T-cell (primary cell): ENCODE measurements at regions of chr15 and their contacts with region 1.

Region 1: GRCh38 chr15:51731549-51732267 is 5.7 kb downstream of the LYSMD2 start:
- DNase-seq: peak in 28 of 35 experiments; percentile 7 to 80 (median 36)
- ATAC-seq: peak; percentile 65 to 81 (median 66)
- H3K4me3 ChIP-seq: peak overlapping the region; percentile 35 to 39
- H3K4me3 Mint-ChIP-seq: peak overlapping the region; percentile 79 to 84 (median 83)
- H3K27ac ChIP-seq: peak overlapping the region; percentile 92
- H3K27ac Mint-ChIP-seq: peak overlapping the region; percentile 95 to 97
- H3K4me1 ChIP-seq: peaks cover 51 to 76% of the 10 kb centered on the region in 2 experiments
- H3K4me1 Mint-ChIP-seq: peaks cover 87 to 93% (median 91%) of the 10 kb centered on the region in 3 donors
- H3K27me3 ChIP-seq: no peaks in the 10 kb centered on the region
- H3K27me3 Mint-ChIP-seq: no peaks in the 10 kb centered on the region

Region 2: DNA sequence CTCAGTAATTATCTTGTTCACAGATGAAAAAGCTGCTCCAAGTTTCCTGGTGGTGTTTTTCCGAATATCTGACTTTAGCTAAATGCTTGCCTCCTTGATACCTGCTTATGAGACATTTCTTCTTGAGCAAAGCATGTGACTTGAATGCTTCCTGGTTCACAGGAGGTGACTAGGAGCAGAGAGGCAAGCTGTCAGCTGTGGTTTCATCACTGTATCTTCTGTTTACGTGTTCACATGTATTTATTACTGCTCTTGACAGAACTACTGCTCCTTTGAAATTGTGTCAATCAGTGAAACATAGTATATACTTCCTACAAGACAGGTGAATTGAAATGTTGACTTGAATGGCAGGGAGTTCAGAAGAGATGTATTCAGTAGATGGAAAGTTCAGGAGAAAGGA is 957.3 kb before region 1 on chr15:
- CTCF ChIA-PET with region 1: no interaction called
- POLR2A ChIA-PET with region 1: interaction called in 1 of 2 experiments, 10 read pairs
- DNase-seq: peak in 14 of 35 experiments; percentile 4 to 56 (median 14)
- ATAC-seq: peak; percentile 58 to 87 (median 72)
- H3K4me3 ChIP-seq: no peak overlapping the region
- H3K4me3 Mint-ChIP-seq: no peak overlapping the region
- H3K27ac ChIP-seq: no peak overlapping the region
- H3K27ac Mint-ChIP-seq: peak overlapping the region; percentile 9 to 37
- H3K4me1 ChIP-seq: peaks cover 0 to 6% of the 10 kb centered on the region in 2 experiments
- H3K4me1 Mint-ChIP-seq: peaks cover 7 to 10% (median 8%) of the 10 kb centered on the region in 3 donors
- H3K27me3 ChIP-seq: no peaks in the 10 kb centered on the region
- H3K27me3 Mint-ChIP-seq: no peaks in the 10 kb centered on the region

Region 3: DNA sequence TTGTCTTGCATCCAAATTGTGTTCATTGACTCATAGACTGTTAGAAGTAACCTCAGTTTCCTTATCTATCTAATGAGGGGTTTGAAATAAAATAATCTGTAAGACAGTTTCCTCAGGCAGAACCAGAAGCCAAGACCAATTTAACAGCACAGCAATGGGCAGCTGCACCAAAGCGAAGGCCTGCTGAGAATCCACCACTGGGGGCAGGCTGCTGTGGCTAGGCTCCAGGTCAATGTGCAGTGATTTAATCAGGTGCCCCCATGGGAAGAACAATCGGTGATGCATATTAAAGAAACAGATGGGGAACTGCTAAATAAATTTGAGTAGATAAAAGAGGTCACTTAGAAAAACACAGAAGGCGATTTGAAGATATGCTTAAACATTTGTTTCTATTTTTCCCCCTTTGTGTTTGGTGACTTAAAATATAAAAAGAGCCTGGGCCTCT is 69.7 kb after region 1 on chr15:
- CTCF ChIA-PET with region 1: no interaction called
- POLR2A ChIA-PET with region 1: no interaction called
- DNase-seq: no peak
- ATAC-seq: no peak
- H3K4me3 ChIP-seq: no peak overlapping the region
- H3K4me3 Mint-ChIP-seq: no peak overlapping the region
- H3K27ac ChIP-seq: no peak overlapping the region
- H3K27ac Mint-ChIP-seq: no peak overlapping the region
- H3K4me1 ChIP-seq: no peaks in the 10 kb centered on the region
- H3K4me1 Mint-ChIP-seq: no peaks in the 10 kb centered on the region
- H3K27me3 ChIP-seq: no peaks in the 10 kb centered on the region
- H3K27me3 Mint-ChIP-seq: no peaks in the 10 kb centered on the region

Region 4: DNA sequence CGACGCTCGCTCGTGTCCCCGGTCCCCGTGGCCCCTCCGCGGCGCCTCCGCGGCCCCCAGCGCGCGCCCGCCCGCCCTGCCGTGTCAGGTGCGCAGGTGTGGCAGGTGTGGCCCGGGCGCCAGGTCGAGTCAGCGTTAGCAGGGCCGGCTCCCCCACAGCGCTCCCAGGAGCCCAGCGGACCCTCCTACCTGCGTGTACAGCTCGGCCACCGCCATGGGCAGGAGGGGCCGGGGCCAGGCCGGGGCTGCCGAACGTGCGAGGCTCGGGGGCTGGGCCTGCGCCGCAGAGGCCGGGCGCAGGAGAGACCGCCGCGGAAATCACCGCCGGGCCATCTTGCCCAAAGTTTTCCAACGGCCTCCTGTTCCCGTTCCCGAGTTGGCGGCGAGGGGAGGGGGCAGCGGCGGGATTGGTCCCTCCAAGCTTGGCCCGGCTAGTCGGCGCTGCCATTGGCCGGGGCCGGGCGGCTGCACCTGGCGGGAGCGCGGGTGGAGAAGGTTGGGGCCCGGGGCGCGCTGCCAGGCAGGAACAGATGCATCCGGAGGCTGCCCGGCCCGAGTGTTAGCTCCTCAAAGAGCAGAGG is 563.8 kb after region 1 on chr15 and contains the start of gene MYO5C:
- CTCF ChIA-PET with region 1: no interaction called
- POLR2A ChIA-PET with region 1: no interaction called
- DNase-seq: no peak
- ATAC-seq: peak in 3 of 4 experiments; percentile 44 to 49 (median 49)
- H3K4me3 ChIP-seq: peak within 1 kb of the TSS in 1 of 2 donors; percentile 25
- H3K4me3 Mint-ChIP-seq: peak within 1 kb of the TSS; percentile 42 to 66 (median 49)
- H3K27ac ChIP-seq: no peak within 1 kb of the TSS
- H3K27ac Mint-ChIP-seq: no peak within 1 kb of the TSS
- H3K4me1 ChIP-seq: peaks cover 0 to 10% of the 10 kb centered on the region in 2 experiments
- H3K4me1 Mint-ChIP-seq: peaks cover 5 to 7% (median 5%) of the 10 kb centered on the region in 3 donors
- H3K27me3 ChIP-seq: peaks cover 0 to 29% of the 10 kb centered on the region in 2 experiments
- H3K27me3 Mint-ChIP-seq: peaks cover 31 to 40% of the 10 kb centered on the region in 2 donors
- total RNA-seq, gene MYO5C: 0.33 to 0.73 (median 0.53) TPM